ENCODE measurements at regions of chr12 and their contacts with region 1.

Region 1: DNA sequence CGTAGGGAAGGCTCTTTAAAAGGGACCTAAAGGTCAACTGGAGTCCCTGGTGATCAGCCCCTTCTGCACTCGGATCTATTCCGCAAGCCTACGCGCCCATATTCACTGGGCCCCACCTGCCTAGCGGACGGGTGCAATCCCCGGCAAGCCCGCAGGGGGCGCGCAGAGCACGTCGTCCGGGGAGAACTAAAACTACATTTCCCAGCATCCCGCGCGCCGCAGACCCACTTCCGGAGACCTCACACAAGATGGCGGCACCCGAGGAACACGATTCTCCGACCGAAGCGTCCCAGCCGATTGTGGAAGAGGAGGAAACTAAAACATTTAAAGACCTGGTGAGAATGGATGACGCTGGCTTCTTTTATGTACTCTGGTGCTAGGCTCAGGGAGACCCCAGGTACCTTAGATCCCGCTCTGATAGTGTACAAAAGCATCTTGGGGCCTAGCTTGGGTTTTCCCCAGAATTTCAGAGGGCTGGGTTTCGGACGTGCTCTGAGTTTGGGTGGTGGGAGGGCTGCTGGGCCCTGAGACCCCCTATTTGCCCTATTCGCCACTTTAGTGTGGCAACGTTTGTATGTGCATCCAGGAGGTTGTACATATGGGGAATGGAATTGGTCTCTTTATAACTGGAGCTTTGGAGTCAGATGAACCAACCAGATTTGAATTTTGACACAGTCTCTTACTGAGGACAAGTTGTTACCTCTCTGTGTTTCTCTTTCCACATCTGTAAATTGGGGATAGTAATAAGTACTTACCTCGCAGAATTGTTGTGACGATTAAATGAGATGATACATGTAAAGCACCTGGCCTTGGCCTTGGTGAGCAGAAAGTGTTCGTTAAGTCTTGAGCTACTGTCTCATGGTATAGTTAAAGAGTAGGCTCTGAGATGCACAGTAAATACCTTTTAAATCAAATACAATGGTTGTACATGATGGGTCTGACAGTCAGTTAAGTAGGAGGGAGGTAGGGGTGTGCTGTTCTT is at the start of gene DDX47:
- DNase-seq: peak; percentile 76
- ATAC-seq: peak; percentile 76
- H3K4me3 ChIP-seq: peak within 1 kb of the TSS; percentile 86
- H3K27ac ChIP-seq: peak within 1 kb of the TSS; percentile 86
- H3K4me1 ChIP-seq: peaks cover 16% of the 10 kb centered on the region
- H3K27me3 ChIP-seq: no peaks in the 10 kb centered on the region
- CTCF ChIP-seq: peak; percentile 96 to 98 (median 98)
- EP300 ChIP-seq: no peak
- POLR2A ChIP-seq: peak; percentile 76
- RAD21 ChIP-seq: peak; percentile 48; the same call in 1 of the 2 replicates
- polyA plus RNA-seq, gene DDX47: 244 to 266 TPM

Region 2: GRCh38 chr12:12582193-12582881 is 231.1 kb before region 1 on chr12:
- CTCF ChIA-PET with region 1: no interaction called
- POLR2A ChIA-PET with region 1: no interaction called
- RAD21 ChIA-PET with region 1: no interaction called
- SMC1A ChIA-PET with region 1: no interaction called
- in situ Hi-C with region 1: no loop called
- intact Hi-C with region 1: no loop called
- DNase-seq: peak; percentile 59
- ATAC-seq: peak; percentile 70
- H3K4me3 ChIP-seq: 0 out of 2 replicates have a peak overlapping the region, but pooled peaks have one; percentile 6
- H3K27ac ChIP-seq: peak overlapping the region; percentile 94
- H3K4me1 ChIP-seq: peaks cover 44% of the 10 kb centered on the region
- H3K27me3 ChIP-seq: no peaks in the 10 kb centered on the region
- CTCF ChIP-seq: no peak
- EP300 ChIP-seq: 0 out of 4 replicates have a peak, but pooled peaks of 1 of the 2 experiments have one; percentile 40
- POLR2A ChIP-seq: peak; percentile 52
- RAD21 ChIP-seq: 0 out of 2 replicates have a peak, but pooled peaks have one; percentile 16

Region 3: DNA sequence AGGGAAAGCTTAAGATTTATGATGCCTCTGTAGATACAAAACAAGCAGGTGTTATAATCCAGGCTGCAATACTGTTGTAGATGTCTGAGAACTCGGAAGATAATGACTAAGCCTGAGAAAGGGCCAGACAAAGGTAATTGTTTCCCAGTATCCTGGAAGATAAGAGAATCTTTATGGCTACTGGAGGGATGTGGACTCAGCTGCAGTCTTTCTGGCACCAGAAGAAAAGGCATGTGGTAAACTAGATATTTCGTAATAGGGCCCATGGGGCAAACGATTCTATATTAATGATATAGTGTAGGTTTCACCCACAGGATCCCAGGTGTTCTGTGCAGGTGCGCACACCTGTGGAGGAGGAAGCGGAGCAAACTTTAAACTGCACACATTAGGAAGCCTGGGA is 37.1 kb before region 1 on chr12:
- CTCF ChIA-PET with region 1: no interaction called
- POLR2A ChIA-PET with region 1: no interaction called
- RAD21 ChIA-PET with region 1: no interaction called
- SMC1A ChIA-PET with region 1: no interaction called
- in situ Hi-C with region 1: no loop called
- intact Hi-C with region 1: no loop called
- DNase-seq: no peak
- ATAC-seq: no peak
- H3K4me3 ChIP-seq: no peak overlapping the region
- H3K27ac ChIP-seq: no peak overlapping the region
- H3K4me1 ChIP-seq: no peaks in the 10 kb centered on the region
- H3K27me3 ChIP-seq: no peaks in the 10 kb centered on the region
- CTCF ChIP-seq: no peak
- EP300 ChIP-seq: no peak
- POLR2A ChIP-seq: no peak
- RAD21 ChIP-seq: no peak

Region 4: DNA sequence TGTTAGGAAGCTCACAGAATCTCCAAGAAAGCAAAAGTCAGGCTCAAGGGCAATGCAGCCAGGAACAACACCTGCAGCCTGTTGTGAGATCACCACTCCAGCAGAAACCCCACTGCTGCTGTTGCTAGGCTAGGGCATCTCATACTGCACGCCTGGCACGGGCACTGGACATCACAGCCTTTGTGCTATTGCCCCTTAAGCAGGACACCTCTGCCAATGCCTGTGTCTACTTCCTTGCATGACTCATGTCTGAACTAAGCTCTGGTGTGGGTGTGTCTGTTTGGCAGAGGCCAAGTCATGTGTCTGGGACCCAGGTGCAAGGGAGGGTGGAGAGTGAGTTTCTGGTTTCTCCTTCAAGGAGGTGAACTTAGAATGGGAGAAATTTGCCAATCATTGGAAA is 10.2 kb before region 1 on chr12:
- CTCF ChIA-PET with region 1: interaction called, 42 read pairs
- POLR2A ChIA-PET with region 1: interaction called, 28 read pairs
- RAD21 ChIA-PET with region 1: interaction called, 8 read pairs
- SMC1A ChIA-PET with region 1: interaction called, 47 read pairs
- in situ Hi-C with region 1: no loop called
- intact Hi-C with region 1: no loop called
- DNase-seq: no peak
- ATAC-seq: peak; percentile 90
- H3K4me3 ChIP-seq: no peak overlapping the region
- H3K27ac ChIP-seq: no peak overlapping the region; the same call in 1 of the 2 replicates
- H3K4me1 ChIP-seq: peaks cover 33% of the 10 kb centered on the region
- H3K27me3 ChIP-seq: no peaks in the 10 kb centered on the region
- CTCF ChIP-seq: no peak
- EP300 ChIP-seq: peak in 1 of 2 experiments; percentile 61; a peak in 2 of 4 replicates
- POLR2A ChIP-seq: 0 out of 2 replicates have a peak, but pooled peaks have one; percentile 29
- RAD21 ChIP-seq: no peak

Region 5: GRCh38 chr12:12837025-12837872 is 23.8 kb after region 1 on chr12:
- CTCF ChIA-PET with region 1: interaction called, 6 read pairs
- POLR2A ChIA-PET with region 1: interaction called, 4 read pairs
- RAD21 ChIA-PET with region 1: interaction called, 3 read pairs
- SMC1A ChIA-PET with region 1: interaction called, 11 read pairs
- in situ Hi-C with region 1: no loop called
- intact Hi-C with region 1: no loop called
- DNase-seq: no peak
- ATAC-seq: peak; percentile 77
- H3K4me3 ChIP-seq: no peak overlapping the region
- H3K27ac ChIP-seq: no peak overlapping the region
- H3K4me1 ChIP-seq: no peaks in the 10 kb centered on the region; the same call in 1 of the 2 replicates
- H3K27me3 ChIP-seq: no peaks in the 10 kb centered on the region
- CTCF ChIP-seq: peak; percentile 37 to 52 (median 43); a peak in 5 of 6 replicates
- EP300 ChIP-seq: no peak
- POLR2A ChIP-seq: no peak
- RAD21 ChIP-seq: peak; percentile 35; the same call in 1 of the 2 replicates

Region 6: GRCh38 chr12:13635709-13636108 is 822.3 kb after region 1 on chr12:
- CTCF ChIA-PET with region 1: no interaction called
- POLR2A ChIA-PET with region 1: no interaction called
- RAD21 ChIA-PET with region 1: no interaction called
- SMC1A ChIA-PET with region 1: no interaction called
- in situ Hi-C with region 1: no loop called
- intact Hi-C with region 1: no loop called
- DNase-seq: no peak
- ATAC-seq: no peak
- H3K4me3 ChIP-seq: no peak overlapping the region
- H3K27ac ChIP-seq: no peak overlapping the region
- H3K4me1 ChIP-seq: no peaks in the 10 kb centered on the region
- H3K27me3 ChIP-seq: no peaks in the 10 kb centered on the region
- CTCF ChIP-seq: no peak
- EP300 ChIP-seq: no peak
- POLR2A ChIP-seq: no peak
- RAD21 ChIP-seq: no peak

Region 7: DNA sequence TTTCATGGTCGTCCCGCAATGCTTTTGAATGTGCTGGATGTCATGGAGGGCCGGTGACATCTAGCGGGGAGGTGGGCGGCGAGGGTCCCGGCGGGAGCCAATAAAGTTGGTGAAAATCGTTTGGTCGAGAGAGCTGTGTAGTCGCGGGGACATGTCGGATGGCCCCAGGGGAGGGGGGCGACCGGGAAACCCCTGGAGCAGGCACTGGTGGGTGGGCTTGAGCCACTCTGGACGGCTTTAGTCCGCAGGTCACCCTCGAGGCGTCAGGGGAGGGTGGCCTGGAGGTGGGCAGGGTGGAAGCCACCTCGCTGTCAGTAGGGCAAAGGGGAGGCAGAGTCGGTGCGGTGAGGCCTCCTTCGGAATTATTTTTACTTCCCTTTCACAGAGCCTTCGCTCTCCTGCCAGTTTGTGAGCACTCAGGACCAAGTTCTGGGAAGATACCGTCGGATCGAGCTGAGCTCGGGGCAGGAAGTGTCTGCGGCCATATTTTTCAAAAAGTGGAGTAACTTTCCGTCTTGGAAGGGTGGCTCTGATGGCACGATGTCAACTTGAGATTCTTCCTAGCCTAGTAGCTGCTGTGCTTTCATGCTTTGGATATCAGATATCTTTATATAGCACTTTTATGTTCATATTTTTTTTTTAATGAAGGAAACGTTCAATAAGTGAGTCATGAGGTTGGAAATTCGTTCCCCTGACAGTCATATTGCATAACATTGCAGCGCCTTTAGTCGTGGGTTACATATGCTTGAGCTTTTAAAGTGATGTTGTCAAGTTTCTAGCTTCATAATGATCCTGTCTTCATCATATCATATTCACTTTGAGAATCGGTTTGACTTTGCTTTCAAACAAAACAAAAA is 1961.7 kb after region 1 on chr12:
- CTCF ChIA-PET with region 1: no interaction called
- POLR2A ChIA-PET with region 1: no interaction called
- RAD21 ChIA-PET with region 1: no interaction called
- SMC1A ChIA-PET with region 1: no interaction called
- in situ Hi-C with region 1: loop called (anchors 25 kb)
- intact Hi-C with region 1: no loop called
- DNase-seq: no peak
- ATAC-seq: no peak
- H3K4me3 ChIP-seq: peak overlapping the region; percentile 86
- H3K27ac ChIP-seq: peak overlapping the region; percentile 84
- H3K4me1 ChIP-seq: peaks cover 5% of the 10 kb centered on the region
- H3K27me3 ChIP-seq: no peaks in the 10 kb centered on the region
- CTCF ChIP-seq: 0 out of 6 replicates have a peak, but pooled peaks of 1 of the 3 experiments have one; percentile 3
- EP300 ChIP-seq: no peak
- POLR2A ChIP-seq: peak; percentile 60
- RAD21 ChIP-seq: peak; percentile 23; the same call in 1 of the 2 replicates